Sciatic nerve (tissue), 2 donors: ENCODE measurements at regions of chr11 and their contacts with region 1.

Region 1: DNA sequence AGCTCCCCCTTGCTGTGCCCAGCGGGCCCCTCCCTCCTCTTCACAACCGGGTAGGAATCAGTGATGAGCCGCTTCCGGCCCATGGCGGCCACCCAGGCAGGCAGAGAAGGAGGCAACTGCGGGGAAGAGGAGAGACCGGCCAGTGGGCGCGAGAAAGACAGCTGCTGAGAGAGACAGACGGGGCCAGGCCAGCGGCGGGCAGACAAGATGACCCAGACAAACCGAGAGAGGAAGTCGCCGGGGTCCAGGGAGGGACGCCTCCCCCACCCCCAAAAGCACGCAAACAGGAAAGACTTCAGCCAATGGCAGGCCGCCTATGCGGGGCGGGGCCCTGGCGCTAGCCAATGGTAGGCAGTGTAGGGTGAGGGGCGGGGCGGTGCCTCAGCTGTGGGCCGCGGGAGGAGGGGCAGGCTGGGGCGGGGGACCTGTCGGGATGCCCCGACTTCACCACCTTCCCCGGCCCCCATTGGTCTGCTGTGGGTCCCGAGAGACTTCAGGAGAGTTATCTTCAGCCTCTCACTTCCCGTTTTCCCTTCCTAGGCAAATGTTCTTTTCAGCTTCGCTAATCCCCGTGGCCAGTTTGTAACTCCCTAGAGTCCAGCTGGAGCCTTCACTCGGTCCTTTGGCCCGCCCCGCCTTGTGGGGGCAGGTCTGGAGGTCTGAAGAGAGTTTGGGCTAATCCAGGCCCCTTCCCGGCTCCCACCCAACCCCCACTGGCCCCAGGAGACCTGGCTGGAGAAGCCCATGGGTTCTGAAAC is at the start of gene POLD4:
- DNase-seq: peak; percentile 99
- ATAC-seq: peak; percentile 96
- total RNA-seq, gene POLD4: 43.5 TPM

Region 2: DNA sequence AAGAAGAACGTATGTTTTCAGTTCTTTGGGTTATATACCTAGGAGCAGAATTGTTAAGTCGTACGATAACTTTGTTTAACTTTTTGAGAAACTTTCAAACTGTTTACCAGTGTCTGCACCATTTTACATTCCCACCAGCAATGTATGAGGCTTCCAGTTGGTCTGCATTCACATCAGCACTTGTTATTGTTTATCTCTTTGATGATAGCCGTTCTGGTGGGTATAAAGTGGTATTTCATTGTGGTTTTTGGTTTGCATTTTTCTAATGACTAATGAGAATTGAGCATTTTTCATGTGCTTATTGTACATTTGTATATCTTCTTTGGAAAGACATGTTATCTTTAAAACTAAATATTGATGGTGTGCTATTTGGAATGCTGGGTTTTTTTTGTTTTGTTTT is 174.6 kb before region 1 on chr11:
- intact Hi-C with region 1: no loop called
- DNase-seq: no peak
- ATAC-seq: no peak

Region 3: GRCh38 chr11:67382276-67383136 is 29.0 kb after region 1 on chr11:
- intact Hi-C with region 1: loop called (anchors 2 kb)
- DNase-seq: peak; percentile 91
- ATAC-seq: peak; percentile 85